Endothelial cell of umbilical vein (primary cell): ENCODE measurements at regions of chr15 and their contacts with region 1.

Region 1: GRCh38 chr15:80093854-80094418 is 34.5 kb downstream of the ZFAND6 start:
- DNase-seq: peak; percentile 75
- H3K4me3 ChIP-seq: no peak overlapping the region
- H3K27ac ChIP-seq: no peak overlapping the region
- H3K4me1 ChIP-seq: no peaks in the 10 kb centered on the region
- H3K27me3 ChIP-seq: no peaks in the 10 kb centered on the region
- CTCF ChIP-seq: no peak
- POLR2A ChIP-seq: no peak

Region 2: GRCh38 chr15:80081390-80081789 is 12.5 kb before region 1 on chr15:
- CTCF ChIA-PET with region 1: interaction called, 10 read pairs
- POLR2A ChIA-PET with region 1: no interaction called
- dilution Hi-C with region 1: no loop called
- intact Hi-C with region 1: no loop called
- DNase-seq: no peak
- H3K4me3 ChIP-seq: no peak overlapping the region
- H3K27ac ChIP-seq: no peak overlapping the region
- H3K4me1 ChIP-seq: no peaks in the 10 kb centered on the region
- H3K27me3 ChIP-seq: no peaks in the 10 kb centered on the region
- CTCF ChIP-seq: no peak
- POLR2A ChIP-seq: no peak

Region 3: DNA sequence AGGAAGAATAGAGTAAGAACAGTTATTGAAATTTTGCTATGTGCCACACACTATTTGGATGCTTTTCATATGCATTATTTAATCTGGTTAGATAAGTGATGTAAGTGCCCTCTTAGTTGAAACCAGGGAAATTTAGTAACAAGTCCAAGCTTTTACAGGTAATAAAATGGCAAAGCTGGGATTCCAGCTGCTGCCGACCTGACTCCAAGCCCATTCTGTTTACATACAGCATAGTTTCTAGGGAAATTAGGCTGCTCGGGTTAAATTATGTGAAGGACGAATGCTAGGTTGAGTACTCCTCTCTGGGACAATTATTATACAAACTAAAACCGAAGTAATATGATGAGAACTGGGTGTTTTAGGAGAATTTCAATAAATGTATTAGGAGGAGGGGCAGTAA is 20.2 kb after region 1 on chr15:
- CTCF ChIA-PET with region 1: no interaction called
- POLR2A ChIA-PET with region 1: no interaction called
- dilution Hi-C with region 1: no loop called
- intact Hi-C with region 1: no loop called
- DNase-seq: no peak
- H3K4me3 ChIP-seq: no peak overlapping the region
- H3K27ac ChIP-seq: no peak overlapping the region
- H3K4me1 ChIP-seq: no peaks in the 10 kb centered on the region
- H3K27me3 ChIP-seq: no peaks in the 10 kb centered on the region
- CTCF ChIP-seq: no peak
- POLR2A ChIP-seq: no peak

Region 4: DNA sequence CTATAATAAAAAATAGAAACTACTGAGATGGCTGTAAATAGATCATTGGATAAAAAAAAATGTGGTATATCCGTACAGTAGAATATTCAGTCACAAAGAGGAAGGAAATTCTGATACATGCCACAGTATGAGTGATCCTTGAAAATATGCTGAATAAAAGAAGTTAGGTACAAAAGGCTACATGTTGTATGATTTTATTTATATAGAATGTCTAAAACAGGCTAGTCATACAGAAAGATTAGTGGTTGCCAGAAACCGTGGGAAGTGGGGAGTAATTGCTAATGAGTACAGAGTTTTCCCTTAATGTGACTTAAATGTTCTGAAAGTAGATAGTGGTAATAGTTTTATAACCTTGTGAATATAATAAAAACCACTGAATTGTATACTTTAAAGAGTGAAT is 34.0 kb after region 1 on chr15:
- CTCF ChIA-PET with region 1: interaction called, 12 read pairs
- POLR2A ChIA-PET with region 1: no interaction called
- dilution Hi-C with region 1: no loop called
- intact Hi-C with region 1: no loop called
- DNase-seq: peak; percentile 51
- H3K4me3 ChIP-seq: no peak overlapping the region
- H3K27ac ChIP-seq: peak overlapping the region; percentile 26
- H3K4me1 ChIP-seq: peaks cover 12% of the 10 kb centered on the region
- H3K27me3 ChIP-seq: no peaks in the 10 kb centered on the region
- CTCF ChIP-seq: no peak
- POLR2A ChIP-seq: no peak